ENCODE measurements at regions of chr12 and their contacts with region 1.

Region 1: GRCh38 chr12:109804820-109805761 is 28.1 kb downstream of the TRPV4 start:
- DNase-seq: peak; percentile 58 to 69 (median 61)
- H3K4me3 ChIP-seq: no peak overlapping the region
- H3K4me3 Mint-ChIP-seq: no peak overlapping the region
- H3K27ac ChIP-seq: no peak overlapping the region
- H3K27ac Mint-ChIP-seq: peak overlapping the region in 4 of 7 donors; percentile 17 to 65 (median 41)
- H3K4me1 ChIP-seq: no peaks in the 10 kb centered on the region
- H3K4me1 Mint-ChIP-seq: peaks cover 0 to 1% (median 0%) of the 10 kb centered on the region in 4 donors
- H3K27me3 ChIP-seq: no peaks in the 10 kb centered on the region
- H3K27me3 Mint-ChIP-seq: peaks cover 0 to 1% of the 10 kb centered on the region in 2 donors

Region 2: DNA sequence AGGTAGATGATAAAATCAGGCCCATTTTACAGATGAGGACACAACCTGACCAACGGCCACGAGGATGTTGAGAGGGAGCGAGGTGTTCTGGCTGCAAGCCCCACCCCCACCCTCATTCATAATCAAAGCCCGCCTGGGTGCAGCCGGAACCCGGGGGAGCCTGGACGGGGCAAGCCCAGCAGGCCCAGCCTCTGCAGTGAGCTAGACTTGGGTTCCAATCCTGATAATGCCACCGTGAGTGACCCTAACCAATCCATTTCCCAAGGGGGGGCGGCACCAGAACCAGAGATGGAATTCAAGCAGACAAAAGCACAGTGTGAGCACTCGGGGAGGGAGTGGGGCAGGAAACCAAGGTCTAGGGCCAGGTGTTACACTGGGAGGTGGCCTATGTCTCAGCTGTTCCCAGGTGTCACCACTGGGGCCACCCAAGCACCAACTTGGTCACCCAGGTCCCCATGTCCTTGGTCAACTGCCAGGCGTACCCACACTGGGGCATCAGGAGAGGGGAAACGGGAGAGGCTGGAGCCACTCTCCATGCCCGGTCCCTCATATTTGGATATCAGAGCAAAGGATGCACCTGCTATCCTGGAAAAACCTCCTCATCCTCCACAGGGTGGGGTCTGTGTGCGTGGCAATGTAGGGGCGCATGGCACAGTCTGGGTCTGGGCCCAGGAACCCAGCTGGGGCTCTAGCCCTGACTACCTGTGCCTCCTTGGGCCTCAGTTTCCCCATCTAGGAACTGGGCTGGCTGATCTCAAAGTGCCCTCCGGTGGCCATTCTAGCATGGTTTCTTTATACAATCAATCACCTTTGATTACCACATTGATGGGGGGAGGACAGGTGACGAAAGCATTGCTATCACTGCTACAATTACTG is 33.1 kb before region 1 on chr12:
- CTCF ChIA-PET with region 1: no interaction called
- POLR2A ChIA-PET with region 1: no interaction called
- intact Hi-C with region 1: no loop called
- DNase-seq: no peak
- H3K4me3 ChIP-seq: no peak overlapping the region
- H3K4me3 Mint-ChIP-seq: no peak overlapping the region
- H3K27ac ChIP-seq: no peak overlapping the region
- H3K27ac Mint-ChIP-seq: no peak overlapping the region
- H3K4me1 ChIP-seq: no peaks in the 10 kb centered on the region
- H3K4me1 Mint-ChIP-seq: peaks cover 0 to 3% (median 0%) of the 10 kb centered on the region in 4 donors
- H3K27me3 ChIP-seq: no peaks in the 10 kb centered on the region
- H3K27me3 Mint-ChIP-seq: peaks cover 1 to 3% of the 10 kb centered on the region in 2 donors

Region 3: GRCh38 chr12:109795023-109795422 is 10.1 kb before region 1 on chr12:
- CTCF ChIA-PET with region 1: interaction called, 13 read pairs
- POLR2A ChIA-PET with region 1: no interaction called
- intact Hi-C with region 1: no loop called
- DNase-seq: no peak
- H3K4me3 ChIP-seq: no peak overlapping the region
- H3K4me3 Mint-ChIP-seq: no peak overlapping the region
- H3K27ac ChIP-seq: no peak overlapping the region
- H3K27ac Mint-ChIP-seq: no peak overlapping the region
- H3K4me1 ChIP-seq: no peaks in the 10 kb centered on the region
- H3K4me1 Mint-ChIP-seq: no peaks in the 10 kb centered on the region
- H3K27me3 ChIP-seq: no peaks in the 10 kb centered on the region
- H3K27me3 Mint-ChIP-seq: peaks cover 4 to 19% of the 10 kb centered on the region in 2 donors

Region 4: GRCh38 chr12:109888179-109889020 is 83.3 kb after region 1 on chr12:
- CTCF ChIA-PET with region 1: interaction called, 29 read pairs
- POLR2A ChIA-PET with region 1: no interaction called
- intact Hi-C with region 1: no loop called
- DNase-seq: peak; percentile 32 to 48 (median 39)
- H3K4me3 ChIP-seq: peak overlapping the region; percentile 2 to 8
- H3K4me3 Mint-ChIP-seq: peak overlapping the region; percentile 60 to 86 (median 82)
- H3K27ac ChIP-seq: peak overlapping the region; percentile 52
- H3K27ac Mint-ChIP-seq: peak overlapping the region; percentile 82 to 98 (median 97)
- H3K4me1 ChIP-seq: peaks cover 42% of the 10 kb centered on the region
- H3K4me1 Mint-ChIP-seq: peaks cover 22 to 44% (median 35%) of the 10 kb centered on the region in 4 donors
- H3K27me3 ChIP-seq: no peaks in the 10 kb centered on the region
- H3K27me3 Mint-ChIP-seq: peaks cover 0 to 2% of the 10 kb centered on the region in 2 donors

Region 5: DNA sequence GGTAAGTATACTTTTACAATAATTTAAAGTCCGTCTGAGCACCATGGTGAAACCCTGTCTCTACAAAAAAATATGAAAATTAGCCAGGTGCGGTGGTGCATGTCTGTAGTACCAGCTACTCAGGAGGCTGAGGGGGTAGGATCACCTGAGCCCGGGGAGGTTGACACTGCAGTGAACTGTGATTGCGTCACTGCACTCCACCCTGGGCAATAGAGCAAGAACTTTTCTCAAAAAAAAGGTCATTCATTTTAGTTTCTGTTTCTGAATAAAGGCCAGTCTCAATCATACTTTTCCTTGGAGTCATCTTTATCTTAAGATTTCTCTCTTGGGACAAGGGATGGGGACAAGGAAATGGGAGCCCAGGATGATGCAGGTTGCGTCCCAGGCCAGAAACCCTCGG is 207.0 kb after region 1 on chr12:
- CTCF ChIA-PET with region 1: no interaction called
- POLR2A ChIA-PET with region 1: no interaction called
- intact Hi-C with region 1: loop called (anchors 5 kb)
- DNase-seq: peak in 4 of 5 donors; percentile 35 to 81 (median 44)
- H3K4me3 ChIP-seq: no peak overlapping the region
- H3K4me3 Mint-ChIP-seq: peak overlapping the region; percentile 2 to 89 (median 72)
- H3K27ac ChIP-seq: peak overlapping the region; percentile 43
- H3K27ac Mint-ChIP-seq: peak overlapping the region; percentile 79 to 97 (median 94)
- H3K4me1 ChIP-seq: peaks cover 68% of the 10 kb centered on the region
- H3K4me1 Mint-ChIP-seq: peaks cover 44 to 69% (median 56%) of the 10 kb centered on the region in 4 donors
- H3K27me3 ChIP-seq: no peaks in the 10 kb centered on the region
- H3K27me3 Mint-ChIP-seq: no peaks in the 10 kb centered on the region

Region 6: DNA sequence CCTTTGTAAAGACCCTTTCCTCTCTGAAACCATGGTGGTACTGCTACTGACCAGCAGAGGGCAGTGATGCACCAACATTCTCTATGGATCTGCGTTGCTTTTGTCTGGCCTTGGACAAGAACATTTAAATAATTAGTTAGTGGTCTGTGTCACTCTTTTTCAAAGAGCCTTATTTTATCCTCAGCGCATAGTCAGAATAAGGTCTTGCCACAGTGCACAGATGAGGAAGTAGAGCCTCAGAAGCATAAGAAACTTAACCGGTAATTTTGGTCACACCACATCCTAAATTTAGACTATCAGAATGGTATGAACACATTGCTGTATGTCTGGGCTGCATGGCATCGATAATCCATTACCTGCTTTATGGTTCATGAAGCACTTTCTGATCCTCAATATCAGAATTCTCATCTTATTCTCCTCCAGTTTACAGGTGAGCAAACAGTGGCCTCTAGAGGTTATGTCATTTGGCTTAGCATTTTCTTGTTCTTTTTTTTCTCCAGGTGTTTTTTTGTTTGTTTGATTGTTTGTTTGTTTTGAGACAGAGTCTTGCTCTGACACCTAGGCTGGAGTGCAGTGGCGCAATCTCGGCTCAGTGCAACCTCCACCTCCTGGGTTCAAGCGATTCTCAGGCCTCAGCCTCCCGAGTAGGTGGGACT is 295.4 kb after region 1 on chr12:
- CTCF ChIA-PET with region 1: interaction called, 3 read pairs
- POLR2A ChIA-PET with region 1: no interaction called
- intact Hi-C with region 1: loop called (anchors 1 kb)
- DNase-seq: peak; percentile 52 to 60 (median 56)
- H3K4me3 ChIP-seq: no peak overlapping the region
- H3K4me3 Mint-ChIP-seq: peak overlapping the region in 2 of 8 donors; percentile 11 to 64
- H3K27ac ChIP-seq: no peak overlapping the region
- H3K27ac Mint-ChIP-seq: peak overlapping the region in 6 of 7 donors; percentile 0 to 43 (median 16)
- H3K4me1 ChIP-seq: peaks cover 6% of the 10 kb centered on the region
- H3K4me1 Mint-ChIP-seq: peaks cover 5 to 8% (median 6%) of the 10 kb centered on the region in 4 donors
- H3K27me3 ChIP-seq: no peaks in the 10 kb centered on the region
- H3K27me3 Mint-ChIP-seq: no peaks in the 10 kb centered on the region

Region 7: DNA sequence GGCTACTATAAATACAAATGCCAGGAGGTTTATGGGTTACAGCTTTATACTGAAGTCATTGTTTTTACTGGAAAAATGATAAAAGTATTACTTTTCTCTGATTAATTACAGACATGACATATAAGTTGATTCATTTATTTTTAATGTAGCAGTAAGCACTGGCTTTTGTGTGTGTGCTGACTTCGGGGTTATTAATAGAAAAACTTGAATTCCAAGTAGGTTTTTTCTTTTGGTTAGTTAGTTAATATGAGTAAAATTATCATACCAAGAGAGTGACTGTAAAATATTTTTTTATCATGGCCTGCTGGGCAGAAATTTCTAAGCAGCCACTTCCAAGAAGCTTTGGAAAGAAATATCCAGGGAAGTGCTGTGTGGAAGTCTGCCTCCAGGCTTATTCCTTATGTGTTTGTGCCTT is 375.5 kb after region 1 on chr12:
- CTCF ChIA-PET with region 1: no interaction called
- POLR2A ChIA-PET with region 1: no interaction called
- intact Hi-C with region 1: no loop called
- DNase-seq: no peak
- H3K4me3 ChIP-seq: no peak overlapping the region
- H3K4me3 Mint-ChIP-seq: no peak overlapping the region
- H3K27ac ChIP-seq: no peak overlapping the region
- H3K27ac Mint-ChIP-seq: no peak overlapping the region
- H3K4me1 ChIP-seq: no peaks in the 10 kb centered on the region
- H3K4me1 Mint-ChIP-seq: no peaks in the 10 kb centered on the region
- H3K27me3 ChIP-seq: no peaks in the 10 kb centered on the region
- H3K27me3 Mint-ChIP-seq: no peaks in the 10 kb centered on the region